Activated CD4-positive, alpha-beta T cell treated with anti-CD3 and anti-CD28 coated beads, Interleukin-2, amount 10 ng/mL, durations not matched to agents 24 days and 14 days (primary cell): ENCODE measurements at regions of chr2 and their contacts with region 1.

Region 1: GRCh38 chr2:227817850-227818674 is 4.4 kb downstream of the CCL20 start:
- DNase-seq: peak; percentile 73
- H3K4me3 Mint-ChIP-seq: peak overlapping the region; percentile 27
- H3K27ac Mint-ChIP-seq: peak overlapping the region; percentile 89
- H3K4me1 Mint-ChIP-seq: peaks cover 19% of the 10 kb centered on the region
- H3K27me3 Mint-ChIP-seq: peaks cover 2% of the 10 kb centered on the region

Region 2: DNA sequence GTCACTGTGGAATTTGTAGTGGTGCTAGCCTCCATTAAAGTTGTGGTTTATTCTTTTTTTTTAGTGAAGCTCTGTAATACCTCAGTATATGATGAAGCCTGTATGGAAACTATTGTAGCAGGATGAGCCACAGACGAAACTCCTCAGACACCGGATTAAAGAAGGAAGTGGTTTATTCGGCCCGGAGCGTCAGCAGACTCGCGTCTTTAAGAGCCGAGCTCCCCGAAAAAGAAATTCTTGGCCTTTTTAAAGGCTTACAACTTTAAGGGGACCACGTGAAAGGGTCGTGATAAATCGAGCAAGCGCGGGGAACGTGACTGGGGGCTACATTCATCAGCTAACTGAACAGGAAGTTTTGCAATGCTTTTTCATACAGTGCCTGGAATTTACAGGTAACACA is 12.5 kb before region 1 on chr2:
- intact Hi-C with region 1: loop called (anchors 2 kb)
- DNase-seq: peak; percentile 68
- H3K4me3 Mint-ChIP-seq: peak overlapping the region; percentile 76
- H3K27ac Mint-ChIP-seq: peak overlapping the region; percentile 79
- H3K4me1 Mint-ChIP-seq: peaks cover 8% of the 10 kb centered on the region
- H3K27me3 Mint-ChIP-seq: peaks cover 1% of the 10 kb centered on the region

Region 3: GRCh38 chr2:227834423-227834822 is 16.4 kb after region 1 on chr2:
- intact Hi-C with region 1: no loop called
- DNase-seq: no peak
- H3K4me3 Mint-ChIP-seq: no peak overlapping the region
- H3K27ac Mint-ChIP-seq: no peak overlapping the region
- H3K4me1 Mint-ChIP-seq: no peaks in the 10 kb centered on the region
- H3K27me3 Mint-ChIP-seq: no peaks in the 10 kb centered on the region